ENCODE measurements at regions of chr4 and their contacts with region 1.

Region 1: GRCh38 chr4:168480931-168481611 is 779 bp upstream of the DDX60L start:
- DNase-seq: peak; percentile 22 to 79 (median 77)
- H3K4me3 ChIP-seq: peak overlapping the region; percentile 97
- H3K4me3 Mint-ChIP-seq: peak overlapping the region; percentile 94 to 99 (median 97)
- H3K27ac ChIP-seq: peak overlapping the region; percentile 96
- H3K27ac Mint-ChIP-seq: peak overlapping the region; percentile 94 to 100 (median 98)
- H3K4me1 ChIP-seq: peaks cover 40% of the 10 kb centered on the region
- H3K4me1 Mint-ChIP-seq: peaks cover 47 to 64% (median 59%) of the 10 kb centered on the region in 3 donors
- H3K27me3 ChIP-seq: no peaks in the 10 kb centered on the region
- H3K27me3 Mint-ChIP-seq: no peaks in the 10 kb centered on the region

Region 2: DNA sequence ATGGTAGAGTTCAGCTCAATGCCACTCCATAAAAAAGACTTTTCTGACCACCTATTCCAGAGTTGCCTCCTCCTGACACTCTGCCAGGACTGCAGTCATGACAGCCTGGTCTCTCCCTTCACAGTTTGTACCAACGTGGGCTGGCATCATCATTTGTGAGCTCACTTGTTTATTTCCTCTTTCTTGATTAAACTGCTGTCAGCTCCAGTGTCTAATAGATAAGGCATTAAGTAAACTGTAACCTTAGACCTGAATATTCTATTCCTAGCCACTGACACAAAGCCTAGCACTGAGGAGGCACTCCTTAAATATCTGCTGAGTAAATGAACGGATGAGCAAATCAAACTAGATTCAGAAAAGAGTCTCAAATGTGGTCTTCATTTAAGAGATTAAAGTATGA is 211.2 kb before region 1 on chr4:
- CTCF ChIA-PET with region 1: no interaction called
- POLR2A ChIA-PET with region 1: no interaction called
- DNase-seq: no peak
- H3K4me3 ChIP-seq: no peak overlapping the region
- H3K4me3 Mint-ChIP-seq: no peak overlapping the region
- H3K27ac ChIP-seq: no peak overlapping the region
- H3K27ac Mint-ChIP-seq: peak overlapping the region in 1 of 8 donors; percentile 81
- H3K4me1 ChIP-seq: no peaks in the 10 kb centered on the region
- H3K4me1 Mint-ChIP-seq: no peaks in the 10 kb centered on the region
- H3K27me3 ChIP-seq: no peaks in the 10 kb centered on the region
- H3K27me3 Mint-ChIP-seq: no peaks in the 10 kb centered on the region

Region 3: GRCh38 chr4:168318266-168318895 is 162.7 kb before region 1 on chr4 and contains the start of gene DDX60:
- CTCF ChIA-PET with region 1: no interaction called
- POLR2A ChIA-PET with region 1: interaction called, 12 read pairs
- DNase-seq: peak; percentile 75 to 90 (median 83)
- H3K4me3 ChIP-seq: peak within 1 kb of the TSS; percentile 89
- H3K4me3 Mint-ChIP-seq: peak within 1 kb of the TSS; percentile 96 to 99 (median 97)
- H3K27ac ChIP-seq: peak within 1 kb of the TSS; percentile 97
- H3K27ac Mint-ChIP-seq: peak within 1 kb of the TSS; percentile 98 to 100 (median 98)
- H3K4me1 ChIP-seq: peaks cover 17% of the 10 kb centered on the region
- H3K4me1 Mint-ChIP-seq: peaks cover 43 to 63% (median 59%) of the 10 kb centered on the region in 3 donors
- H3K27me3 ChIP-seq: no peaks in the 10 kb centered on the region
- H3K27me3 Mint-ChIP-seq: no peaks in the 10 kb centered on the region
- total RNA-seq, gene DDX60: 4.9 to 6.3 TPM

Region 4: DNA sequence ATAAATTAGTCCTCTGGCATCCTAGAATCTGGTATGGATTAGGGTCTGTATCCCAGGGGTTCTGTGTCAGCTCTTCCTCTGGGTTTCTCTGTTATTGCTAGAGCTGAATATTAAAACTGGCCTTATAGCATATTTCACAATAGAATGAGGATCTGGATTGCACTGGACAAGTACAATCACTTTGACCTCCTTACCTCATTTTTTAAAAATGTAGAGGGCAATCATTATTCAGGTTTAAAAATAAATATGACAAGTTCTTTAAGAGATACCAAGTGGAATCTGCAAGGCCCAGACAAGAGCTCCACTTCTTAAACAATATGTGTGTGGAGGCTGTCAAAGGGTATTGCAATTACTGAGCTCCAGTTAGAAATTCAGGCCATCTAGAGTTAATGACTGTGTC is 17.2 kb after region 1 on chr4:
- CTCF ChIA-PET with region 1: interaction called, 3 read pairs
- POLR2A ChIA-PET with region 1: interaction called, 11 read pairs
- DNase-seq: no peak
- H3K4me3 ChIP-seq: no peak overlapping the region
- H3K4me3 Mint-ChIP-seq: no peak overlapping the region
- H3K27ac ChIP-seq: no peak overlapping the region
- H3K27ac Mint-ChIP-seq: no peak overlapping the region
- H3K4me1 ChIP-seq: no peaks in the 10 kb centered on the region
- H3K4me1 Mint-ChIP-seq: no peaks in the 10 kb centered on the region
- H3K27me3 ChIP-seq: no peaks in the 10 kb centered on the region
- H3K27me3 Mint-ChIP-seq: peaks cover 11 to 48% of the 10 kb centered on the region in 2 donors

Region 5: DNA sequence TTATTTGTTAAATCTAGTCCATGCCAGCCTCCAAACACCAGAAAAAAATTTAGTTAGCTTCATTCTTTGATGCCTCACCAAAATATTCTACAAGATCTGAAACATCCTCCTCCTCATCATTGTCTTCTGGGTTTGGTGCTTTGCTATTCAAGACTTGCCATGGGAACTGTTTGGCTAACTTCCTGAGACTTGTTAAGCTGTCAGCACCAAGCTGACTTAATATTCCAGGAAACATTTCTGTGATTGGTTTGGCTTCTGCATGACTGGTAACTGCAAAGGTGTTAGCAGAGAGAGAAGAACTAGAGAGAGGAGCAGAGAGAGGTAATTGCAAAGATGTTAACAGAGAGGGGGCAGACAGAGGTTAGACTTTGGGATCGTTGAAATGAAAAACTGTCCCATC is 117.1 kb after region 1 on chr4:
- CTCF ChIA-PET with region 1: no interaction called
- POLR2A ChIA-PET with region 1: no interaction called
- DNase-seq: no peak
- H3K4me3 ChIP-seq: no peak overlapping the region
- H3K4me3 Mint-ChIP-seq: no peak overlapping the region
- H3K27ac ChIP-seq: no peak overlapping the region
- H3K27ac Mint-ChIP-seq: no peak overlapping the region
- H3K4me1 ChIP-seq: no peaks in the 10 kb centered on the region
- H3K4me1 Mint-ChIP-seq: no peaks in the 10 kb centered on the region
- H3K27me3 ChIP-seq: no peaks in the 10 kb centered on the region
- H3K27me3 Mint-ChIP-seq: peaks cover 2 to 16% of the 10 kb centered on the region in 2 donors

Measured in CD8-positive, alpha-beta memory T cell (primary cell).